Motor neuron (in vitro differentiated cells): ENCODE measurements at regions of chr9 and their contacts with region 1.

Region 1: DNA sequence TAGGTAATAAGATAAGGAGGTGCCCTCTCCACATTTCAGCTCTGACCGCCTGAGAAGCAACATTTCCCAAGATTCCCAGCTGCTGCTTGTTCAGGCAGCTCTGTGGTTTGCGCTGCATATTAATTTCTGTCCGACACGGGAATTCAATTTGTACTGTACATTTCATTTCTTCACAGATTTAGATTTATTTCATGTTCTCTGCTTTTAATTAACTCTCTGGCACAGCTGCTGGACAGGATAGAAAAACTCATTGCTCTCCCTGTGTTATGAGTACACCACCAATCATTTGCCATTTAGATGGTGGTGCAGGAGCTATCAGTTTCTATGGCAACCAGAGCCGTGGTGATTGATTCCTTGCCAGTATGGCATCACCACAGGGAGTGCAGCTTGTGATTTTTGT is 558.5 kb downstream of the DMRTA1 start:
- ATAC-seq: peak in 6 of 8 experiments; percentile 26 to 97 (median 96)
- H3K4me3 ChIP-seq: peak overlapping the region in 2 of 5 donors; percentile 7 to 14
- H3K27ac ChIP-seq: peak overlapping the region; percentile 31 to 57
- H3K4me1 ChIP-seq: peaks cover 8 to 33% of the 10 kb centered on the region in 2 donors

Region 2: GRCh38 chr9:23123048-23123632 is 118.0 kb after region 1 on chr9:
- in situ Hi-C with region 1: loop called in 1 of 9 experiments (anchors 25 kb)
- ATAC-seq: peak in 1 of 8 experiments; percentile 26
- H3K4me3 ChIP-seq: no peak overlapping the region
- H3K27ac ChIP-seq: no peak overlapping the region
- H3K4me1 ChIP-seq: no peaks in the 10 kb centered on the region